Activated T-helper 2 cell treated with anti-CD3 and anti-CD28 coated beads, Interferon-gamma antibody, Interleukin-2, Interleukin-4, amounts not matched to agents 10 μg/mL and 5 μg/mL and 100 μg/mL, durations not matched to agents 14 hours and 24 hours and 36 hours (primary cell): ENCODE measurements at regions of chrX and their contacts with region 1.

Region 1: DNA sequence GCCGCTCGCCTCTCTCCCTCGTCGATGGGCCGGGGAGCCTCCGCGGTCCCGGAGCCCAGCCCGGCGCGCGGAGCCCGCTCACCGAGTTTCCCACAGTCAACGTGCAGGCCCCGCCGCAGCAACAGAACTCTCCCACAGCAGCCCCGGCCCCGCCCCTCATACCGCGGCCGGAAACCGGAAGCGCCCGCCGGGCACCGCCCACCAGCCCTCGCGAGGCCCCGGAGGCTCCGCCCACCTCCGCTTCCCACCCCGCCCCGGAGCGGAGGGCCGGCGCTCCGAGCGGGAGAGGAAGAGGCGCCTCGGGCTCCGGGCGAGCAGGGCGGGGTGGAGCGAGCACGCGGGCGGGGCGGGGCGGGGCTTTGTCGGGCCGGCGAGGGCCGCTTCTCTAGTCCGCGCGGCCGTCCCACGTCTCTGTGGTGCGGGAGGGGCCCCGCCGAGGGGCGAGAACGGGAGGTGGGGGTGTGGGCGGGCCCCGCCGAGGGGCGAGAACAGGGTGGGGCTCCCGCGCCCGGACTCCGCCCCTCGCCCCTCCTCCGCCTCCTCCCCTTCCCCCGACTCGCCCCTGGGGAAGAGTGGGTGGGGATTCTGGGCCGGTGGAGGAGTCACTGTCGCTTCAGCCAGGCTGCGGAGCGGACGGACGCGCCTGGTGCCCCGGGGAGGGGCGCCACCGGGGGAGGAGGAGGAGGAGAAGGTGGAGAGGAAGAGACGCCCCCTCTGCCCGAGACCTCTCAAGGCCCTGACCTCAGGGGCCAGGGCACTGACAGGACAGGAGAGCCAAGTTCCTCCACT is at the starts of genes ABCD1 and BCAP31:
- DNase-seq: peak; percentile 85
- H3K4me3 Mint-ChIP-seq: peak within 1 kb of the TSS; percentile 89
- H3K27ac Mint-ChIP-seq: peak within 1 kb of the TSS; percentile 79
- H3K4me1 Mint-ChIP-seq: peaks cover 16% of the 10 kb centered on the region
- H3K27me3 Mint-ChIP-seq: no peaks in the 10 kb centered on the region
- total RNA-seq, gene ABCD1: 8.8 and 10.1 TPM in 2 replicates
- total RNA-seq, gene BCAP31: 154 TPM in 2 replicates

Region 2: GRCh38 chrX:153766098-153766817 is 41.8 kb after region 1 on chrX:
- intact Hi-C with region 1: no loop called
- DNase-seq: no peak
- H3K4me3 Mint-ChIP-seq: no peak overlapping the region
- H3K27ac Mint-ChIP-seq: peak overlapping the region; percentile 26
- H3K4me1 Mint-ChIP-seq: peaks cover 4% of the 10 kb centered on the region
- H3K27me3 Mint-ChIP-seq: no peaks in the 10 kb centered on the region

Region 3: DNA sequence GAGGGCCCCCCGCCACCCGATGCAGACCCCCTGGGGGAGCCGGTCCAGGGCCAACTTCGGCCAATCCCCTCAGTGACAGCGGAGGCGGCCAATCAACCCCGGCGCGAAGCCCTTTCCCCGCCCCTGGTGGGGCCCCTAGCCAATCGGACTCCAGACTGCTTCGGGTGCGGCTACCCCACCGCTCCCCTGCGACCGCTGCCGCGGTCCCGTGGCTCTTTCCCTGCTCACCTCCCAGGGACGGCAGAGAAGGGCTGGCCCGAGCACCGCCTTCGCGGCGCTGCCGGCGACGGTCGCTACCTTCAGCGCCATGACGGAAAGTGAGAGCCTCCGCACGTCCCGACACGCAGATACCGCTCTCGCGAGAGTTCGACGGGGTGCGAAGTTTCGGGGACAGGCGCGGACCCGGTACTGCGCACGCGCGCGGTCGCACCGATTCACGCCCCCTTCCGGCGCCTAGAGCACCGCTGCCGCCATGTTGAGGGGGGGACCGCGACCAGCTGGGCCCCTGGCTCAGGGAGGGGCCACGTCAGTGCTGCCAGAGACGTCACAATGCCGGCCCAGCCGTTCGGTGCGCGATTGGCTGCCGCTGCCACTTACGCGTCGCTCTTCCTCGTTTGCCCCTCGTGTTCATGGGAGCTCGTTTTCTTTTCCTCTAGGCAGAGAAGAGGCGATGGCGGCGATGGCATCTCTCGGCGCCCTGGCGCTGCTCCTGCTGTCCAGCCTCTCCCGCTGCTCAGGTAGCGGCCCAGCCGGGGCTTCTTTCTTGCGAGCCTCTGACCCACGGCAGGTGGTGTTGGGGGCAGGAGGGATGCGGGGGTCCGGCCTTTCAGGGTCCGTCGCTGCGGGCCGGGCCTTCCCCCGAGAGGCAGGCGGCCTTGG is 69.8 kb after region 1 on chrX and contains the starts of genes IDH3G and SSR4:
- intact Hi-C with region 1: loop called (anchors 1 kb)
- DNase-seq: peak; percentile 91
- H3K4me3 Mint-ChIP-seq: peak within 1 kb of the TSS; percentile 97
- H3K27ac Mint-ChIP-seq: peak within 1 kb of the TSS; percentile 93
- H3K4me1 Mint-ChIP-seq: peaks cover 9% of the 10 kb centered on the region
- H3K27me3 Mint-ChIP-seq: no peaks in the 10 kb centered on the region
- total RNA-seq, gene IDH3G: 70.8 and 72.4 TPM in 2 replicates
- total RNA-seq, gene SSR4: 282 and 303 TPM in 2 replicates